Endothelial cell of umbilical vein (primary cell): ENCODE measurements at regions of chr5 and their contacts with region 1.

Region 1: GRCh38 chr5:103582364-103582763 is 19.8 kb upstream of the NUDT12 start:
- DNase-seq: peak; percentile 65
- H3K4me3 ChIP-seq: no peak overlapping the region
- H3K27ac ChIP-seq: no peak overlapping the region
- H3K4me1 ChIP-seq: no peaks in the 10 kb centered on the region
- H3K27me3 ChIP-seq: no peaks in the 10 kb centered on the region
- CTCF ChIP-seq: peak; percentile 25 to 33
- POLR2A ChIP-seq: no peak

Region 2: GRCh38 chr5:103428411-103428871 is 153.9 kb before region 1 on chr5:
- CTCF ChIA-PET with region 1: no interaction called
- POLR2A ChIA-PET with region 1: no interaction called
- dilution Hi-C with region 1: no loop called
- intact Hi-C with region 1: no loop called
- DNase-seq: no peak
- H3K4me3 ChIP-seq: no peak overlapping the region
- H3K27ac ChIP-seq: no peak overlapping the region
- H3K4me1 ChIP-seq: no peaks in the 10 kb centered on the region
- H3K27me3 ChIP-seq: no peaks in the 10 kb centered on the region
- CTCF ChIP-seq: no peak
- POLR2A ChIP-seq: no peak

Region 3: GRCh38 chr5:103667068-103667467 is 84.7 kb after region 1 on chr5:
- CTCF ChIA-PET with region 1: interaction called, 12 read pairs
- POLR2A ChIA-PET with region 1: no interaction called
- dilution Hi-C with region 1: no loop called
- intact Hi-C with region 1: no loop called
- DNase-seq: peak; percentile 80
- H3K4me3 ChIP-seq: no peak overlapping the region
- H3K27ac ChIP-seq: peak overlapping the region; percentile 84
- H3K4me1 ChIP-seq: peaks cover 32% of the 10 kb centered on the region
- H3K27me3 ChIP-seq: no peaks in the 10 kb centered on the region
- CTCF ChIP-seq: no peak
- POLR2A ChIP-seq: no peak

Region 4: GRCh38 chr5:103808464-103809106 is 226.2 kb after region 1 on chr5:
- CTCF ChIA-PET with region 1: interaction called, 52 read pairs
- POLR2A ChIA-PET with region 1: no interaction called
- dilution Hi-C with region 1: no loop called
- intact Hi-C with region 1: loop called (anchors 1 kb)
- DNase-seq: peak; percentile 48
- H3K4me3 ChIP-seq: no peak overlapping the region
- H3K27ac ChIP-seq: no peak overlapping the region
- H3K4me1 ChIP-seq: no peaks in the 10 kb centered on the region
- H3K27me3 ChIP-seq: no peaks in the 10 kb centered on the region
- CTCF ChIP-seq: peak; percentile 73
- POLR2A ChIP-seq: no peak

Region 5: DNA sequence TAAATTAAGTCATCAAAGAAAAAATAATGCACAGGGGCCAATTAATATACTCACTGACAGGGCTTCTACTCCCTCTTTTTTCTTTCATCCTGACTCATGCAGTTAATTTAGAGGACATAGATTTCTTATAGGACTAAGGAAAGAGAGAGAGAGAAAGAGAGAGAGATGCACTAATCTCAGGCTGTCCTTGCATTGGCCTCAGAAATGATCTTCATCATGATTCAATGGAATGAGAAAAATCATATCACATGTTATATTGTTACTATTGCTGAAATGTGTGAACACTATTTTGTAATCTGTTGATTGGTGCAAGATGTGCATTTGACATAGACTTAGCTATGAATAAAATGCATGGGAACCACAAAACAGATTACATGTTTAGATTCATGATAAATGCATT is 588.6 kb after region 1 on chr5:
- CTCF ChIA-PET with region 1: interaction called, 14 read pairs
- POLR2A ChIA-PET with region 1: no interaction called
- dilution Hi-C with region 1: no loop called
- intact Hi-C with region 1: no loop called
- DNase-seq: no peak
- H3K4me3 ChIP-seq: no peak overlapping the region
- H3K27ac ChIP-seq: no peak overlapping the region
- H3K4me1 ChIP-seq: no peaks in the 10 kb centered on the region
- H3K27me3 ChIP-seq: no peaks in the 10 kb centered on the region
- CTCF ChIP-seq: no peak
- POLR2A ChIP-seq: no peak

Region 6: GRCh38 chr5:104178829-104179456 is 596.6 kb after region 1 on chr5:
- CTCF ChIA-PET with region 1: interaction called, 539 read pairs
- POLR2A ChIA-PET with region 1: no interaction called
- dilution Hi-C with region 1: no loop called
- intact Hi-C with region 1: loop called (anchors 1 kb)
- DNase-seq: peak; percentile 64
- H3K4me3 ChIP-seq: no peak overlapping the region
- H3K27ac ChIP-seq: no peak overlapping the region
- H3K4me1 ChIP-seq: no peaks in the 10 kb centered on the region
- H3K27me3 ChIP-seq: no peaks in the 10 kb centered on the region
- CTCF ChIP-seq: peak; percentile 59 to 63
- POLR2A ChIP-seq: no peak

Region 7: DNA sequence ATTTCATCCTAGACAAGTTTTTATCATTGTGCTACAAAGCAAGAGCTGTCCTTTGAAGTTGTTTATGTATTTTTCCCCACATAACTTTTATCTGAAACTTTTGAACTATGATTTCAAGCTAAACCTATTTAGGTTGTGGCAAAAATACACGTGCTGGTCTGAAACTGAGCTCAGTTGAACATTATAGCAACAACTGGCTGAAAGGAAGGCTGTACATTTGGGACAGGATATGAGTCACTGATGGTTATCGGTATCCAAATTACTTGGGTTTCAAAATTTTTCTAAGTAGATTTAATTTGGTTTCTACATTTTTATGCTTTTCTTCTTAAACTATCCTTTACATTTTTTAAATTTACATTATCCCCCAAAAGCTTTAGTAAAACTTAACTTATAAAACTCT is 607.5 kb after region 1 on chr5:
- CTCF ChIA-PET with region 1: interaction called, 19 read pairs
- POLR2A ChIA-PET with region 1: no interaction called
- dilution Hi-C with region 1: no loop called
- intact Hi-C with region 1: no loop called
- DNase-seq: peak; percentile 79
- H3K4me3 ChIP-seq: no peak overlapping the region
- H3K27ac ChIP-seq: peak overlapping the region; percentile 36
- H3K4me1 ChIP-seq: peaks cover 17% of the 10 kb centered on the region
- H3K27me3 ChIP-seq: no peaks in the 10 kb centered on the region
- CTCF ChIP-seq: no peak
- POLR2A ChIP-seq: no peak

Region 8: DNA sequence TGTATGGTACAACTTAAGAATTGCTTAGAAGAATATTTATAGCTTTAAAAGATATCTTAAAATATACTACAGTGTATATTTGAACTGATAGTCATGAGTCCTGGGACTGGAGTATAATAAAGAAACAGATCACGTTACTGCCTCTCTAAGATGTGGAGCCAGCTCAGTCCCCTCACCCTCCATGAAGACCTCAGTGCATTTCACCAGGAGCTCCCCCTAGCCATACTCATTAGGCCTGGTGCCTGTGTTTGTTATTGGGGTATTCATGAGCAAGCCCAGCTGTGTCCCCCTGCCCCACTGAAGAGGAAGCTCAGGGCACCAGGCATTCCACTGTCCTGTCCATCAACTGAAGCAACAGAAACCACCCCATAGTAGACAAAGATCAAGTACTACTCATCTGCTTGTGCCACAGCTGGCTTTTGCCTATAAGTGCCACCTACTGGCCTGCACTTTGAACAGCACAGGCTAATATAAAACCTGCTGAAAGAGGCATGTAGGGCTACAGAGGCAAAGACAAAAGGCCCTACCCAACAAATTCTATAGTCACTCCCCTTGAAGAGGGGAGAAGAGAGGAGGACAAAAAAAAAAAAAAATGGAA is 830.4 kb after region 1 on chr5:
- CTCF ChIA-PET with region 1: interaction called, 30 read pairs
- POLR2A ChIA-PET with region 1: no interaction called
- dilution Hi-C with region 1: no loop called
- intact Hi-C with region 1: no loop called
- DNase-seq: peak; percentile 26
- H3K4me3 ChIP-seq: no peak overlapping the region
- H3K27ac ChIP-seq: no peak overlapping the region
- H3K4me1 ChIP-seq: no peaks in the 10 kb centered on the region
- H3K27me3 ChIP-seq: no peaks in the 10 kb centered on the region
- CTCF ChIP-seq: peak; percentile 33 to 44
- POLR2A ChIP-seq: no peak